KBM-7 (cell line): ENCODE measurements at regions of chr13 and their contacts with region 1.

Region 1: DNA sequence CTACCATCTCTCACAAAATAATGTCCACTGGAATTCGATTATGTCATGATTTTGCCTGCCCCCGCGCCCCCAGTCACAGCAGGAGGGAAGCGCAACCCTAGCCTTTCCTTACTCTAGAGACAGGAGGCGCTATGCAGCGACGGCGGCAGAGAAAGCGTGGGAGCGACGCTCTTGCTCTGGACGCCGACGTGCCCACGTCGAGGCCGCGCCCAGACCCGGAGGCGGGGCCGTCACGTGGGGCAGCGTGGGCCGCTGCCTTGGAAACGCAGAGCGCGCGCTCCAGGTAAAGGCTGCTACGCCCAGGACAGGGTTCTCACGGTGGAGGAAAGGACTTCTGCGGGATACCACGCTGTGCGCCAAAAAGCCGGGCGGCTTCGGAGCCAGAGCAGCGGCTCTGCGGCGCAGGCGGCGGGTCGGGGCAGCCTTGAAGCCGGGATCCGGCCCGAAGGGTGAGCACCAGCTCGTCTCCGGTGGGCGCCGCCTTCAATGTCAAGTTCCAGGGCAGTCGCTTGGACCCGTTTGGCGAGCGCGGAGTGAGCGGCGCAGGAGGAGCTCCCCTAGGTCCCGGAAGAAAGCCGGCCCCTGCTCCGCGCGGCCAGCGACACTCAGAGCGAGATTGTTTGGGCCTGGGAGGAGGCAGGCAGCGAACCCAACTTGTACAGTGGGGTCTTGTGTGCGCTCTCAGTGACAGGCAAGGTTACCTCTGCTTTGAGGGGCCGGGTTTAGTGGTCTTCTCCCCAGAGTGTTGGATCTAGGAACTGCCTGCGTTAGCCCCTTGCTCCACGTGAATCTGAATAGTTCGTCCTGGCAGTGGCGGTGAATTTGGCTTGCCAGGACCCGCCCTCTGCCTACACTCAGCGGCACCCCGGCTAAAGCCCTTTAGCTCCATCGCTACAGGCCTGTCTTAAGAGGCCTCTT is 121.7 kb downstream of the MRPL57 start:
- DNase-seq: peak; percentile 92

Region 2: GRCh38 chr13:21476893-21477472 is 178.8 kb after region 1 on chr13:
- in situ Hi-C with region 1: loop called (anchors 25 kb)
- DNase-seq: peak; percentile 91